ENCODE measurements at regions of chr1 and their contacts with region 1.

Region 1: GRCh38 chr1:18820791-18821641 is 38.4 kb downstream of the TAS1R2 start:
- DNase-seq: peak; percentile 53 to 97
- H3K4me3 ChIP-seq: no peak overlapping the region
- H3K27ac ChIP-seq: no peak overlapping the region
- H3K4me1 ChIP-seq: peaks cover 3 to 10% (median 5%) of the 10 kb centered on the region in 4 experiments; a peak in 5 of 7 replicates
- H3K27me3 ChIP-seq: peaks cover 0 to 19% (median 15%) of the 10 kb centered on the region in 4 experiments; a peak in 6 of 7 replicates
- CTCF ChIP-seq: peak; percentile 93 to 99 (median 94)
- EP300 ChIP-seq: no peak
- POLR2A ChIP-seq: no peak
- RAD21 ChIP-seq: peak; percentile 96 to 97

Region 2: DNA sequence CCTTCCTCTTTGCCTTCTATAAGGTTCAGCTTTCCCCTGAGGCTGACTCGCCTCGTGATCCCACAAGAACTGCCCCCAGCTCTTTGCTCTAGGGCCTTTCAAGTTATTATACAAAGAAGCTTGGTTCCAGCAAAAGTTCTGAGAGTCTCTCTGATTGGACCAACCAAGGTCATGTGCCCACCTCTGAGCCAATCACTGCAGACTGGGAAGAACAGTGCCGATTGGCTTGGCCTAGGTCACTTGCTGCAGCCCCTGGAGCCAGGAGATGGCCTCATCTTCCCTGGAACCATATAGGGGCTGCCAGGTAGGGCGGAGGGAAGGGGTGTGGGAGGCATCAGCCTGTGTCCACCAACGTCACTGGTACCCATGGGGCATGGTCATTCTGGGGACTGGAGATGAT is 15.6 kb after region 1 on chr1:
- CTCF ChIA-PET with region 1: interaction called, 11 read pairs
- POLR2A ChIA-PET with region 1: no interaction called
- DNase-seq: no peak
- H3K4me3 ChIP-seq: no peak overlapping the region
- H3K27ac ChIP-seq: no peak overlapping the region
- H3K4me1 ChIP-seq: no peaks in the 10 kb centered on the region
- H3K27me3 ChIP-seq: peaks cover 0 to 10% (median 2%) of the 10 kb centered on the region in 4 experiments; a peak in 3 of 7 replicates
- CTCF ChIP-seq: no peak
- EP300 ChIP-seq: no peak
- POLR2A ChIP-seq: no peak
- RAD21 ChIP-seq: no peak

Region 3: GRCh38 chr1:18941221-18942141 is 120.5 kb after region 1 on chr1:
- CTCF ChIA-PET with region 1: no interaction called
- POLR2A ChIA-PET with region 1: no interaction called
- DNase-seq: no peak
- H3K4me3 ChIP-seq: peak overlapping the region in 1 of 4 experiments; percentile 0; a peak in 1 of 8 replicates
- H3K27ac ChIP-seq: peak overlapping the region; percentile 61
- H3K4me1 ChIP-seq: peaks cover 7 to 34% (median 27%) of the 10 kb centered on the region in 4 experiments
- H3K27me3 ChIP-seq: no peaks in the 10 kb centered on the region
- CTCF ChIP-seq: no peak
- EP300 ChIP-seq: no peak
- POLR2A ChIP-seq: peak in 1 of 2 experiments; percentile 39; a peak in 1 of 3 replicates
- RAD21 ChIP-seq: no peak

Region 4: DNA sequence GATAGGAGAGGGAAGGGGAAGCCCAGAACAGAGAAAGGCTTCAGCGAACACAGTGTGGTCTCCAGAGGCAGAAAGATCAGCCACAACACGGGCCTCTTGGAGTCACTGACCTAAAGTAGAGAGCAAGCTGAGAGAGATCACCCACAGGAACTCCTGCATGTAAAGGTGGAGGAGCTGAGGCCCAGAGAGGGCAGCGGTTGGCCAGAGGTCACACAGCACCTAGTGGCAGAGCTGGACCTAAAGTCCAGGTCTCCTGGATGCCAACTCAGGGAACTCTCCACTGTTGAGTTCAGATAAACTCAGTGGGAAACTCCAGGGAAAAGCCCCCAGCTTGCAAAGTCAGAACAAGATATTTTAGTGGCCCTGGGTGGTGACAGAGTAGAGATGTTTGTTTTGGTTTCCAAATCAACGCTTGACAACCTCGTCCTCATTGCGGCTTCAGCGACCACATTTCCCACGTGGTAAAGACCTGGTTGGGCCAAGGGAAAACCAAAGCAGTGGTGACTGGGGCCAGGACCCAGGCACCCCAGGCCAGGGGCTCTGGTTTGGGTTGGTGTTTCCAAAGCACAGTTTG is 130.9 kb after region 1 on chr1:
- CTCF ChIA-PET with region 1: no interaction called
- POLR2A ChIA-PET with region 1: no interaction called
- DNase-seq: no peak
- H3K4me3 ChIP-seq: no peak overlapping the region
- H3K27ac ChIP-seq: no peak overlapping the region
- H3K4me1 ChIP-seq: peaks cover 14 to 18% (median 15%) of the 10 kb centered on the region in 4 experiments
- H3K27me3 ChIP-seq: peaks cover 0 to 22% (median 15%) of the 10 kb centered on the region in 4 experiments; a peak in 5 of 7 replicates
- CTCF ChIP-seq: no peak
- EP300 ChIP-seq: no peak
- POLR2A ChIP-seq: no peak
- RAD21 ChIP-seq: no peak